ENCODE measurements at regions of chr4 and their contacts with region 1.

Region 1: GRCh38 chr4:98928505-98929340 is at the start of gene EIF4E:
- DNase-seq: peak; percentile 89
- ATAC-seq: peak; percentile 81
- H3K4me3 Mint-ChIP-seq: peak within 1 kb of the TSS; percentile 97
- H3K27ac Mint-ChIP-seq: peak within 1 kb of the TSS; percentile 98
- H3K4me1 Mint-ChIP-seq: peaks cover 20% of the 10 kb centered on the region
- H3K27me3 Mint-ChIP-seq: no peaks in the 10 kb centered on the region
- total RNA-seq, gene EIF4E: 77.5 to 88.6 TPM

Region 2: DNA sequence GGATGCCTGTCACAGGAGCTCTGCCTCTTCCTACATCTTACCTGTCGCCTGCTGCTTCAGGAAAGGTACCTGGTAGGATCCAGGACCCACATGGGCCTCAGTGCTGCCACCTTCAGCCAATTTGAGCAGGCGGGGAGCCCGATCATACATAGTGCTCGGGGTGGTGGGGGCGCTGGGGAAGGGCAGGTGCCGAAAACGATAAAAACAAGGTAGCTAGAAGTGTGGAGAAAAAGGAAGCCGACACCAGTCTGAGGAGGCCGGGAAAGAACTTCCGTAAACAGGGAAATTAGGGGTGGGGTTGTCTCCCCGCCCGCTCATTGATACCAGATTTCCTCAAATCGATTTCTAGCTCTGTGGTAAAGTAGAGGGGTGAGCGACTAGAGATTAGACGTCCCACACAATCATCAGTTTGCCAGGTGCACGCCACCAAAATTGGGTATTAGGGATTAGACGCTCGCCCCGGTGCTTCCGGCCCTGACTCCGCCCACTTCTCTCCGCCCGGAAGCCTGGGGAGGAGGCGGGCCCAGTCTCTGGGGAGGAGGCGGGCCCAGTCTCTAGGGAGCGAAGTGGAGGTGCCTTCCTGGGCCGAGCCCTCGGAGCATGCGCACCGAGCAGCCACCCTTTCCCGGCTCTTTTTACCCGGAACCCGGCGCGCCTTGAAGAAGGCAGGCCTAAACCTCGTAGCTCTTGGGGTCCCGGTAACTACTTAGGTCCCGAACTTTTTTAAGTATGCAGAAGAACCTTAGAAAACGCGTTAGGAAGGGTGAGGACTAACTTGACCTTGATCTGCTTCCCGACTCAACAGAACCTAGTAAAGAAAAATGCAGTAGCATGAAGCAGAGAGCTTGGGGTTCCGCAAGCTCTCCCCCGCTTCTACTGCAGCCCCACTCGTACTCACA is 785.5 kb before region 1 on chr4 and contains the start of gene STPG2:
- POLR2A ChIA-PET with region 1: interaction called, 15 read pairs
- DNase-seq: peak; percentile 94
- ATAC-seq: peak; percentile 100
- H3K4me3 Mint-ChIP-seq: peak within 1 kb of the TSS; percentile 91
- H3K27ac Mint-ChIP-seq: peak within 1 kb of the TSS; percentile 97
- H3K4me1 Mint-ChIP-seq: peaks cover 16% of the 10 kb centered on the region
- H3K27me3 Mint-ChIP-seq: no peaks in the 10 kb centered on the region
- total RNA-seq, gene STPG2: not detected

Region 3: DNA sequence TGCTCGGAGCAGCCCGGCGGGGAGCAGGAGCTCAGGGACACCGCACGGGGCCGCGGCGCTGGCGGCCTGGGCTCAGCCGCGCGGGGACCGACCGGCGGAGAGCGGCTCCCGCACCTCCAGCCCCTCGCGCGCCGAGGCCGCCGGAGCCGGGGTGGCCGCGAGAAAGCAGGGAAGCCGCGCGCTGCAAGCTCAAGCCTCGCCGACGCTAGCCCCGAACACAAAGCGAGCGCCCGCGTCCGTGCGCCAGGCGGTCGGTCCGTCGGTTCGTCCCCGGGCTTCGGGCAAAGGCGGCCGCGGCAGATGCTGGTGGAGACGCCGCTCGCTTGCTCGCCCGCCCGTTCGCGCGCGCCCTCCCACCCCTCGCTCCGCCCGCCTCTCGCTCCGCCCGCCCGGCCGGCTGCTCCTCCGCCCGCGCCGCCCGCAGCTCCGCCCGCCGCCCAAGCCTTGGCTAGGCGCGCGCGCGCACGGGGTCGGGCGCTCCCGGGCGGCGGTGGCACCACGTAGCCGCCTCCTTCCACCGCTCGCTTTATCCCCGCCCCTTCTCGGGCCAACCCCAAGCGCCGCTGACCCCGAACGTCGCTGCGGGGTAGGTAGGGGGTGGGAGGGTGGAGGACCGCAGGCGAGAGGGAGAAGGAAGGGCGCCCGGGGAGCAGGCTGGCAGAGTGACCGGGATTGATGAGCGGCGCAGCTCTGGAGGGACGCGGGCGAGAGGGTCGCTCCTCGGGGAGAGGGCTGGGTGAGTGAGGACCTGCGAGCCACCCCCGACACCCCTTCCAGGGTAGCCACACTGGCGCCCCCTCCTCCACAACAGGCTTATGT is 270.2 kb before region 1 on chr4 and contains the start of gene TSPAN5:
- POLR2A ChIA-PET with region 1: interaction called, 12 read pairs
- DNase-seq: peak; percentile 90
- ATAC-seq: peak; percentile 72
- H3K4me3 Mint-ChIP-seq: peak within 1 kb of the TSS; percentile 94
- H3K27ac Mint-ChIP-seq: peak within 1 kb of the TSS; percentile 77
- H3K4me1 Mint-ChIP-seq: peaks cover 67% of the 10 kb centered on the region
- H3K27me3 Mint-ChIP-seq: no peaks in the 10 kb centered on the region
- total RNA-seq, gene TSPAN5: 19.8 to 21.4 TPM

Region 4: GRCh38 chr4:99088481-99089365 is 160.0 kb after region 1 on chr4 and contains the start of gene ADH5:
- POLR2A ChIA-PET with region 1: interaction called, 29 read pairs
- DNase-seq: peak; percentile 89
- ATAC-seq: peak; percentile 97
- H3K4me3 Mint-ChIP-seq: peak within 1 kb of the TSS; percentile 95
- H3K27ac Mint-ChIP-seq: peak within 1 kb of the TSS; percentile 98
- H3K4me1 Mint-ChIP-seq: peaks cover 29% of the 10 kb centered on the region
- H3K27me3 Mint-ChIP-seq: no peaks in the 10 kb centered on the region
- total RNA-seq, gene ADH5: 97.1 to 103 TPM